Endothelial cell of umbilical vein (primary cell): ENCODE measurements at regions of chr9 and their contacts with region 1.

Region 1: GRCh38 chr9:18632632-18633403 is 158.9 kb downstream of the ADAMTSL1 start:
- DNase-seq: peak; percentile 96
- H3K4me3 ChIP-seq: no peak overlapping the region
- H3K27ac ChIP-seq: peak overlapping the region; percentile 81
- H3K4me1 ChIP-seq: peaks cover 39% of the 10 kb centered on the region
- H3K27me3 ChIP-seq: no peaks in the 10 kb centered on the region
- CTCF ChIP-seq: no peak
- POLR2A ChIP-seq: no peak

Region 2: DNA sequence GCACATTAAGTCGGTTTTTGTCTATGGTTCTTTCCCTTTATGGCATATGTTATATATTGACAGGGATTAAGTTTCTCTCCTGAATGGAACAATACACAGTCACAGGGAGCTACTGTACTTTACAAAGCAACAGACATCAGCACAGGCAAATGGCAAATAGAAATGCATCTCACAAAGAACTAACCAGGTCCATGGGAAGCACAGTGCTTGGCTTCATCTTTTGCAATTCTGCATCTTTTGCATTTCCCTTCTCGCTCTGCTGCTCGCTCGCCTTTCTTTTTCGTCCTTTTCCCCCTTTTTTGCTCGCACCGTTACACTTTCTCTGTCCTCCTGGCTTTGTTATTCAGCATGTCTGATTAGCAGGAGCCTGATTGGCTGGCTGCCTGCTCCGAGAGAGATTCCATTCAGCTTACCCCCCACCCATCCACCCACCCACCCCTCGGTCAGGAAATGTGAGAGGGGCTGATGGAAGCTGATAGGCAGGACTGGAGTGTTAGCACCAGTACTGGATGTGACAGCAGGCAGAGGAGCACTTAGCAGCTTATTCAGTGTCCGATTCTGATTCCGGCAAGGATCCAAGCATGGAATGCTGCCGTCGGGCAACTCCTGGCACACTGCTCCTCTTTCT is 159.1 kb before region 1 on chr9 and contains the start of gene ADAMTSL1:
- CTCF ChIA-PET with region 1: no interaction called
- POLR2A ChIA-PET with region 1: no interaction called
- dilution Hi-C with region 1: no loop called
- intact Hi-C with region 1: loop called (anchors 5 kb)
- DNase-seq: peak; percentile 93
- H3K4me3 ChIP-seq: peak within 1 kb of the TSS; percentile 35 to 51 (median 38)
- H3K27ac ChIP-seq: peak within 1 kb of the TSS; percentile 48
- H3K4me1 ChIP-seq: peaks cover 37% of the 10 kb centered on the region
- H3K27me3 ChIP-seq: no peaks in the 10 kb centered on the region
- CTCF ChIP-seq: no peak
- POLR2A ChIP-seq: peak; percentile 33
- total RNA-seq, gene ADAMTSL1: 16.9 and 18.4 TPM in 2 replicates

Region 3: GRCh38 chr9:18504707-18505106 is 128.1 kb before region 1 on chr9:
- CTCF ChIA-PET with region 1: no interaction called
- POLR2A ChIA-PET with region 1: no interaction called
- dilution Hi-C with region 1: no loop called
- intact Hi-C with region 1: no loop called
- DNase-seq: no peak
- H3K4me3 ChIP-seq: no peak overlapping the region
- H3K27ac ChIP-seq: no peak overlapping the region
- H3K4me1 ChIP-seq: no peaks in the 10 kb centered on the region
- H3K27me3 ChIP-seq: no peaks in the 10 kb centered on the region
- CTCF ChIP-seq: no peak
- POLR2A ChIP-seq: no peak

Region 4: GRCh38 chr9:18605766-18606180 is 27.0 kb before region 1 on chr9:
- CTCF ChIA-PET with region 1: no interaction called
- POLR2A ChIA-PET with region 1: no interaction called
- dilution Hi-C with region 1: no loop called
- intact Hi-C with region 1: no loop called
- DNase-seq: peak; percentile 52
- H3K4me3 ChIP-seq: no peak overlapping the region
- H3K27ac ChIP-seq: no peak overlapping the region
- H3K4me1 ChIP-seq: no peaks in the 10 kb centered on the region
- H3K27me3 ChIP-seq: no peaks in the 10 kb centered on the region
- CTCF ChIP-seq: no peak
- POLR2A ChIP-seq: no peak

Region 5: GRCh38 chr9:18658764-18659705 is 26.2 kb after region 1 on chr9:
- CTCF ChIA-PET with region 1: interaction called, 5 read pairs
- POLR2A ChIA-PET with region 1: interaction called, 4 read pairs
- dilution Hi-C with region 1: no loop called
- intact Hi-C with region 1: loop called (anchors 1 kb)
- DNase-seq: peak; percentile 71
- H3K4me3 ChIP-seq: no peak overlapping the region
- H3K27ac ChIP-seq: peak overlapping the region; percentile 57
- H3K4me1 ChIP-seq: peaks cover 12% of the 10 kb centered on the region
- H3K27me3 ChIP-seq: no peaks in the 10 kb centered on the region
- CTCF ChIP-seq: no peak
- POLR2A ChIP-seq: no peak

Region 6: GRCh38 chr9:18768951-18769622 is 136.3 kb after region 1 on chr9:
- CTCF ChIA-PET with region 1: no interaction called
- POLR2A ChIA-PET with region 1: no interaction called
- dilution Hi-C with region 1: no loop called
- intact Hi-C with region 1: no loop called
- DNase-seq: no peak
- H3K4me3 ChIP-seq: no peak overlapping the region
- H3K27ac ChIP-seq: no peak overlapping the region
- H3K4me1 ChIP-seq: no peaks in the 10 kb centered on the region
- H3K27me3 ChIP-seq: no peaks in the 10 kb centered on the region
- CTCF ChIP-seq: no peak
- POLR2A ChIP-seq: no peak

Region 7: GRCh38 chr9:18791074-18791473 is 158.3 kb after region 1 on chr9:
- CTCF ChIA-PET with region 1: no interaction called
- POLR2A ChIA-PET with region 1: no interaction called
- dilution Hi-C with region 1: no loop called
- intact Hi-C with region 1: loop called (anchors 5 kb)
- DNase-seq: no peak
- H3K4me3 ChIP-seq: no peak overlapping the region
- H3K27ac ChIP-seq: no peak overlapping the region
- H3K4me1 ChIP-seq: peaks cover 18% of the 10 kb centered on the region
- H3K27me3 ChIP-seq: no peaks in the 10 kb centered on the region
- CTCF ChIP-seq: peak; percentile 25 to 36
- POLR2A ChIP-seq: no peak